PC-9 (cell line): ENCODE measurements at regions of chr9 and their contacts with region 1.

Region 1: DNA sequence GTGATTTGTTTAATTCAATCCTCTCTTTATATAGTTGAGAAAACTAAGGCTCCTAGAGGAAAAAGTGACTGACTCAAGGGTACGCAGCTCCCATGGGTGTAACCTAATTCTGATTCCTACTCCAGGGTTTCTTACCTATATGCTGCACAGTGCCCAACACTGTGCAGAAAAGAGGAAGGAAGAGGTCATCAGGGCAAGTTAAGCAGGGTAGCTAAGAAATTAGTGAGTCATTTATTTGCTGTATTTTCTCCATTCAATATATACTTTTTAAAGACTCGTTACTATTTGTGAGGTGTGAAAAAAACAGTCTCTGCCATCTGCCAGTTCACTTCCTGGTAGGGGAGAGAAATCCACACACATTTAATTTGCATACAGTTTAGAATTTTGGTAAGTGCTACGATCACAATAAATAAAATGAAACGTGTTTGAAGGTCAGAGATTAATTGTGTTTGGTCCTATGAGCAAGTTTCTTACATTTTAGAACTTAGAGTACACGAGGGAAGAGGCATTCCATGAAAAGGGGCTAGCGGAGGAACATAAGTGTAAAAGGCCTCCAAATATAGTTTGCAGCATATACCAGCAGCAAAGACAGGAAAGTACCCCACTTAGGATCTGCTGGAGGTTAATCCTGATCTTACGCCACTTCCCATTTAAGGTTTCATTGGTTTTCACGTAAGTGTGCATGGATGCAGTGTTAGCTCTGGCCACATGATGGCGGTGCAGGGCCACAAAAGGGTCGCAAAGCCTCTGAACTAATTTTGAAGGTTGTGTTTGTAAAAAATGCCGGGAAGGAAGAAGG is 59.9 kb upstream of the TLR4 start:
- DNase-seq: peak; percentile 52 to 57
- H3K4me3 ChIP-seq: no peak overlapping the region; the same call in 1 of the 2 replicates
- H3K27ac ChIP-seq: no peak overlapping the region
- H3K4me1 ChIP-seq: no peaks in the 10 kb centered on the region
- H3K27me3 ChIP-seq: peaks cover 28% of the 10 kb centered on the region
- CTCF ChIP-seq: peak; percentile 96

Region 2: GRCh38 chr9:117782931-117783788 is 138.8 kb after region 1 on chr9:
- CTCF ChIA-PET with region 1: no interaction called
- POLR2A ChIA-PET with region 1: no interaction called
- intact Hi-C with region 1: loop called (anchors 10 kb)
- DNase-seq: peak in 1 of 2 experiments; percentile 46
- H3K4me3 ChIP-seq: peak overlapping the region; percentile 54
- H3K27ac ChIP-seq: no peak overlapping the region
- H3K4me1 ChIP-seq: no peaks in the 10 kb centered on the region; the same call in 1 of the 2 replicates
- H3K27me3 ChIP-seq: no peaks in the 10 kb centered on the region
- CTCF ChIP-seq: peak; percentile 84